K562 (cell line): ENCODE measurements at regions of chr1 and their contacts with region 1.

Region 1: DNA sequence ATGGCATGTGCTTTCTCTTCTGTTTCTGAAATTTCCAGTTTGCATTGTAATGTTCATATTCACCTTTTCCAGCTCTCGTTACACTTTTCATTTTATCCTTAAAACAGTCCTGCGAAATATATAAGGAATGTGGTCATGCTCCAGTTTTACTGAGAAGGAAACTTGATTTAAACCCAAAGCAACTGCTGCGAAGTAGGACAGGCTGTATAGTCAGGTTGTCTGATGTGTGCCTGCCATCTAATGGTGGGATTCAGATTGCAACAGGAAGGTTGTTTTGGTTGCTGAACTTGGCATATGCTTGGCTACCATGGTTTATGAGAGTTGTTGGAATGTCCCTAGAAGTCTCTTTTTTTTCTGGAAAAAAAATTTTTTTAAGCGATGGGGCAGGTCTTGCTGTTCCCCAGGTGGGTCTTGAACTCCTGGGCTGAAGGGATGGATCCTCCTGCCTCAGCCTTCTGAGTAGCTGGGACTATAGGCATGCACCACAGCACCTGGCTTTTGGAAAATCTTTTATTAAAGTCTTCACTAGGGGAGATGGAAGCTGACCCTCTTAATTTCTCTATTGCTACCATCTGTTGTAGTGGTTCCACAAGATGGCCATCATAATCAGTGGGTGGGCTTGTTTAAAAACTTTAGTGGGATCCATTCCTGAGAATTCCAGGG is 86.9 kb downstream of the UCK2 start:
- DNase-seq: peak; percentile 78 to 83 (median 80)
- ATAC-seq: peak; percentile 87
- H3K4me3 ChIP-seq: no peak overlapping the region
- H3K27ac ChIP-seq: no peak overlapping the region
- H3K4me1 ChIP-seq: no peaks in the 10 kb centered on the region
- H3K27me3 ChIP-seq: no peaks in the 10 kb centered on the region
- CTCF ChIP-seq: peak; percentile 92 to 98 (median 93)
- EP300 ChIP-seq: no peak
- POLR2A ChIP-seq: no peak
- RAD21 ChIP-seq: peak; percentile 99

Region 2: DNA sequence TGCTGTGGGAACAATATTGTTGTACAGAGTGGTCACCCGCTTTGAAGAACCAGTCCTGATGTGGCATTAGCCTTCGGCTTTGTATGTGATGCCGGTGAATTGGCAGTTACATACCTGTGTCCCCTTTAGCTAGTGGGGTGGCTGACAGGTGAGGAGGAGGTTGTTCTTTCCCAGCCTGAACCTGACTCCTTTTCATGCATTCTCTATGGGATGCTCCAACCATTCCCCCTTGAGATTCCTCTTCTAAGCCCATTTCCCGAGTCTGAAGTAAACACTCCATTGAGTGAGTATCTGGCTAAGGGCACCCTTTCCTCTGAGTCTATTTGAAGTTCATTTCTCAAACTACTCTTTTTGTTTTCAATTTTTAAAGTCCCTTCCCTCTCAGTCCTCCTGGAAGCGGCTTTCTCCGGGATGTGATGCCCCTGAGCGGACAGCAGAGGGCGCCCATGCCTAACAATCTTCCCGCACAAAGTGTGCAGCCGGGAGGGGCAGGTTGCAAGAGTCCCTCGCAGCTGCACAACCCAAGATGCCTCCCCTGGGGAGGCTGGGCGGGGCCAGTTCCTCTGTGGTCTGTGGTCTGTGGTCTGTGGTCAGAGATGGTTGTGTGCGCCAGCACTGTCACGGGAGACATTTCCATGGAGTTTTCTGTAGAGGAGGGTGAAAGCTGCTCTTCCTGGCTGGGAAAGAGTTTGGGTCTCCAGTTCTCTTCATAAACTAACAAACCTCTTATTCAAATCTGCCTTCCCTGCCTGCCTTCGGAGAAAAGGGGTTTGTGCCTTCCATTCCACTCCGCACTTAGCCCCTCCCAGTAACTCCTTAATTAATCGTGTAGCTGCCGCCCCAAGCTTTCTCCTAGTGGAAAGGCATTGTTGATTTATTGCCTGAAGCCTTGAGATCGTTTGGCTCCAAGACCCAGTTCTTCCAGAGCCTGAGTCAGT is 521.4 kb before region 1 on chr1:
- CTCF ChIA-PET with region 1: interaction called, 3 read pairs
- POLR2A ChIA-PET with region 1: interaction called, 3 read pairs
- in situ Hi-C with region 1: loop called (anchors 10 kb)
- intact Hi-C with region 1: loop called (anchors 5 kb)
- DNase-seq: peak; percentile 90 to 98 (median 94)
- ATAC-seq: peak; percentile 100
- H3K4me3 ChIP-seq: no peak overlapping the region
- H3K27ac ChIP-seq: no peak overlapping the region
- H3K4me1 ChIP-seq: peaks cover 5 to 7% of the 10 kb centered on the region in 2 experiments; a peak in 3 of 5 replicates
- H3K27me3 ChIP-seq: peaks cover 0 to 4% of the 10 kb centered on the region in 2 experiments; a peak in 1 of 5 replicates
- CTCF ChIP-seq: peak; percentile 91 to 98 (median 96)
- EP300 ChIP-seq: 0 out of 2 replicates have a peak, but pooled peaks have one; percentile 39
- POLR2A ChIP-seq: no peak
- RAD21 ChIP-seq: peak; percentile 92 to 97

Region 3: DNA sequence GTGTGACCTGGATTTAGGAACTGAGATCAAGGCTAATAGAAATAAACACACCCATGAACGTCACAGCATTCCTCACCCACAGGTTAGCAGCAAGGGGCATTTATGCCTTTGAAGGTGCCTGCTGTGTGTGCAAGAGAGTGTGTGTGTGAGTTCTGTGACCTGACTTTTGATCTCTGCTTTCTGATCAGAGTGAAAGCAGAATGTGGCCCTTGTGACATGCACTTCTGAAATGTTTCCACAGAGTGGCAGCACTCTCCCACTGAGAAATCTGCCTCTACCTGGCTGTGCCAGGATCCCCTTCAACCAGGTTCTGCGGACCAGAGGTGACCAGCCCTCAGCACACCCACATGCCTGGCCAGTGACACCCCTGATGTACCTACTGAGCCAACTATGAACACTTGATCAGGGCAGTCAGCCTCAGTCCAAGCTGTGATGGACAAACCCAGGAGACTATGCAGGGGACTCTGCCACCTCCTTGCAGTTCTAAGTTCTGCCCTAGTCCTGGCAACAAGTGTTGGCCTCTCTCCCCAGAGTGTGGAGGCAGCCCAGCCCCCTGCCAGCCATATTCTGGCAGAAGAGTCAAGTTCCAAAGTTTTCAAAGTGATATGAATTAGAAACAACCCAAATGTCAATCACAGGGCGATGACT is 510.3 kb before region 1 on chr1:
- CTCF ChIA-PET with region 1: interaction called, 6 read pairs
- POLR2A ChIA-PET with region 1: no interaction called
- in situ Hi-C with region 1: loop called (anchors 10 kb)
- intact Hi-C with region 1: loop called (anchors 5 kb)
- DNase-seq: peak; percentile 28 to 39 (median 33)
- ATAC-seq: peak; percentile 81
- H3K4me3 ChIP-seq: no peak overlapping the region
- H3K27ac ChIP-seq: no peak overlapping the region
- H3K4me1 ChIP-seq: no peaks in the 10 kb centered on the region
- H3K27me3 ChIP-seq: peaks cover 4 to 23% of the 10 kb centered on the region in 2 experiments; a peak in 3 of 5 replicates
- CTCF ChIP-seq: peak; percentile 52 to 71 (median 70); a peak in 5 of 6 replicates
- EP300 ChIP-seq: no peak
- POLR2A ChIP-seq: no peak
- RAD21 ChIP-seq: peak; percentile 36 to 74

Region 4: GRCh38 chr1:165686121-165686970 is 227.9 kb before region 1 on chr1:
- CTCF ChIA-PET with region 1: interaction called, 3 read pairs
- POLR2A ChIA-PET with region 1: interaction called, 3 read pairs
- in situ Hi-C with region 1: no loop called
- intact Hi-C with region 1: loop called (anchors 1 kb)
- DNase-seq: peak; percentile 29 to 64 (median 47)
- ATAC-seq: peak; percentile 98
- H3K4me3 ChIP-seq: no peak overlapping the region
- H3K27ac ChIP-seq: no peak overlapping the region
- H3K4me1 ChIP-seq: no peaks in the 10 kb centered on the region; a peak in 2 of 5 replicates
- H3K27me3 ChIP-seq: no peaks in the 10 kb centered on the region
- CTCF ChIP-seq: peak; percentile 42 to 61 (median 53); a peak in 4 of 6 replicates
- EP300 ChIP-seq: no peak
- POLR2A ChIP-seq: no peak
- RAD21 ChIP-seq: peak in 1 of 2 experiments; percentile 57; a peak in 2 of 4 replicates

Region 5: GRCh38 chr1:165717918-165718515 is 196.2 kb before region 1 on chr1:
- CTCF ChIA-PET with region 1: interaction called, 51 read pairs
- POLR2A ChIA-PET with region 1: no interaction called
- in situ Hi-C with region 1: loop called (anchors 5 kb)
- intact Hi-C with region 1: loop called (anchors 1 kb)
- DNase-seq: peak; percentile 42 to 77 (median 58)
- ATAC-seq: peak; percentile 91
- H3K4me3 ChIP-seq: no peak overlapping the region
- H3K27ac ChIP-seq: no peak overlapping the region
- H3K4me1 ChIP-seq: no peaks in the 10 kb centered on the region
- H3K27me3 ChIP-seq: no peaks in the 10 kb centered on the region; a peak in 2 of 5 replicates
- CTCF ChIP-seq: peak; percentile 83 to 97 (median 87)
- EP300 ChIP-seq: no peak
- POLR2A ChIP-seq: no peak
- RAD21 ChIP-seq: peak; percentile 97 to 99

Region 6: DNA sequence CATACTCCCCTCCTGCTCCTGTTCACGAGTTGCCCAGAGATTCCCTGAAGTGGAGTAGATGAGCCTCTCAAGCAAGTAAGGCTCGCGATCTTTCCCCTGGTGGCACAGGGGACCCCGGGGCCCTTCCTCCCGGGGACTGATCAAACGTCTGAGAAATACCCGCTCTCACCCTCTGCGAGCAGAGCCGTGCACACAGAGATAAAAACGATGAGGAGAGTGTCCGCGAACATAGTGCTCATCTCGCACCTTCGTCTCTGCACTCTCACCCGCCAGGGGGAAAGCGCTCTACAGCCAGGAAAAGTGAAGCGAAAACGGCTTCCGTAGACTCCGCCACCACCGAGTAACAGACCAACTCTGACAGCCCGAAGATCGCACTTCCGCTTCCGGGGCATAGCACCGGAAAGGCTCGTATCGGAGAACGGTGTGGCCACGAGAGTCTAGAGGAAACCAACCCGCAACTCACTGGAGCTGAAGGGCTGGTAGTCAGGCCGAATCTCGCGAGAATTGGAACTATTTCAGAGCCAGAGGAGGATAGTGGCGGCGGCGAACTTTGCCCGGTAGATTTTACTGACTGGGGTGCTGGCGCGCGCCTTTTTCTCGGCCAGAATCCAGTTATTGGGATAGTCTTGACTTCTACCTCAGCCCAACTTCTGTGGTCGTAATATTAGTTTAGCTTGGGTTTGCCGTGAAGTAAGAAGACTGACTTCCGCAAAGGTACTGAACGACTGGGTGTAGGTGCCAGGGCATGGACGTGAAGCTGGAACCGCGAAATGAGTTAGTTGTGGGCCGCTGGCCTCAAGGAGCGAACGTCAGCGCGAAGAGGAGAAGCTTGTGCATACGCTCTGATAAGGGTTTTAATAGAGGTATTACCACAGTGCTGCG is 145.5 kb before region 1 on chr1 and contains the start of gene TMCO1:
- CTCF ChIA-PET with region 1: no interaction called
- POLR2A ChIA-PET with region 1: no interaction called
- in situ Hi-C with region 1: no loop called
- intact Hi-C with region 1: loop called (anchors 5 kb)
- DNase-seq: peak; percentile 90 to 99 (median 95)
- ATAC-seq: peak; percentile 96
- H3K4me3 ChIP-seq: peak within 1 kb of the TSS; percentile 73
- H3K27ac ChIP-seq: peak within 1 kb of the TSS; percentile 96
- H3K4me1 ChIP-seq: peaks cover 21 to 44% of the 10 kb centered on the region in 2 experiments
- H3K27me3 ChIP-seq: no peaks in the 10 kb centered on the region
- CTCF ChIP-seq: peak; percentile 27 to 45 (median 35); a peak in 4 of 6 replicates
- EP300 ChIP-seq: peak; percentile 62
- POLR2A ChIP-seq: peak; percentile 98
- RAD21 ChIP-seq: peak in 1 of 2 experiments; percentile 24; a peak in 1 of 4 replicates
- polyA plus RNA-seq, gene TMCO1: 412 to 561 TPM

Region 7: DNA sequence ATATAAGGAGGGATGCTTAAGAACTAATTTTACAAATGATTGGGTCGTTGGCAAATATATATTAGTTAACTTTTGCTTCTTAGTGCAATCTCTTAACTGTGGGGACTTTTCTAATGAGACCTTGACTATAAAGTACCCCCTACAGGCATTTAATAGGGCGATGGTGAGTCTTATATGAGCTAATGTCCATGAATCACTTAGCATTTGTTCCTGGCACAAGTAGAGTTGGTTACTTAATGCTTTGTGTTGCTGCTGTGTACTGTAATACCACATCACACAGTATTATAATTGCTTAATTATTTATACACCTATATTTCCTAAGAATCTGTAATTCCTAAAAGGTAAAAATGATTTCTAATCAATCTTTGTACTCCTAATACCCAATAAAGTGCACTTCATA is 120.3 kb before region 1 on chr1:
- CTCF ChIA-PET with region 1: no interaction called
- POLR2A ChIA-PET with region 1: no interaction called
- in situ Hi-C with region 1: no loop called
- intact Hi-C with region 1: no loop called
- DNase-seq: no peak
- ATAC-seq: no peak
- H3K4me3 ChIP-seq: no peak overlapping the region
- H3K27ac ChIP-seq: no peak overlapping the region
- H3K4me1 ChIP-seq: no peaks in the 10 kb centered on the region
- H3K27me3 ChIP-seq: peaks cover 0 to 5% of the 10 kb centered on the region in 2 experiments; a peak in 1 of 5 replicates
- CTCF ChIP-seq: no peak
- EP300 ChIP-seq: no peak
- POLR2A ChIP-seq: no peak
- RAD21 ChIP-seq: no peak